GM10248 (cell line): ENCODE measurements at regions of chr9 and their contacts with region 1.

Region 1: DNA sequence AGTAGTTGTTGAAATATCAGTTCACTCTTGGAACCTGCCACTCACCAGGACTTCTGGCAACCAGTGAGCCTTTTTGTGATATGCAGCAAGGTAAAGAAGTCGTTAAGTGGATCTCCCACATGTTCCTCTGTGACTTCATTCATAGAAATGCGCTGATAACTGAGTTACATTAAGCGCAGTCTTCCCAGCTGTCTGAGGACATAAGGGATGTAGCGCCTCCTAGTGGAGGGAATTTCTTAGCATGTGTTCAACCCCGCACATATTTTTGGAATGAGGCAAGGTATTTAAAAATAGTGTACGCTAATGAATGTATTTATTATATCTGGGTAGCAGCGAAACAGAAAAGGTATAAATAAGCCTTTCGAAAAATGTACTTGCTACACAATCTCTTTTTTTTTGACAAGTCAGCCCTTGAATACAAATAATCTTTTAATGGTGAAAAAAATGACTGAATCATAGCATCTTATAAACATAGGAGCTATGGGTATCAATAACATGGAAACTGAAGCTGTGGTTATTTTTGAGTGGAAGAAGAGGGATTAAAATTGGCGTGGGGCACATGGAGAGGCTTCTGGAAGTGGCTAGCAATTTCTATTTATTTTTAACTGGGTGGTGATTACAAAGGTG is 38.0 kb downstream of the PALM2AKAP2 start:
- DNase-seq: peak; percentile 46
- CTCF ChIP-seq: peak; percentile 74

Region 2: DNA sequence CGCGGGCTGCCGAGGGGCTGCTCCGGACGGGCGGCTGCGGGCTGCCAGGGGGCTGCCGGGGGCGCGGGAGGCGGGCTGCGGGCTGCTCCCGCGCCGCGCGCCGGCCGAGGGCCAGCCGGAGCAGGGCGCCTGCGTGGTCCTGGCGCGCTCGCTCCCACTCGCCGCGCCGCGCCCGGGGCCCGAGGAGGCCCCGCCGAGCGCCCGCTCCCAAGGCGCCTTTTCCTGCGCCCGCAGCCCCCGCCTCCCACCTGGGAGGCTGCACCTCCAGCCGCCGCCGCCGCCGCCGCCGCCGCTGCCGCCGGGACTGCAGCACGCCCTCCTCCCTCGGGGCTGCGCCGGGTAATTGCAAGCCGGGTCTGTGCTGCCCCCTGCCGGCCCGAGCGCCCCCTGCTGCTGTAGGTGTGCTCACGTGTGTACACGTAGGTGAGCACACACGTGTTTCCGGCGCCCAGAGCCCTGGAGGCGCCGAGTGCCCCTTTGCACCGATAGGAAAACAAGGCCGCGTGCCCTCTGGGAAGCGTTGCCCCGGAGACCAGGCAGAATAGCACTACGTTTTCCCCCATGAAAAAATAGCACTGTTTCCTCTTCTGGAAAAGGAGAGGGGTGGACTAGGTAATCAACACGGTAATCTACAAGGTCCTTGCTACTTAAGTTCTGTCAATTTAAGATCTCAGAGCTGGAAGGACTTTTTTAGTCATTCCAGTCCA is 497.1 kb before region 1 on chr9 and contains the start of gene EPB41L4B:
- CTCF ChIA-PET with region 1: no interaction called
- POLR2A ChIA-PET with region 1: no interaction called
- DNase-seq: peak; percentile 92
- CTCF ChIP-seq: peak; percentile 98

Region 3: DNA sequence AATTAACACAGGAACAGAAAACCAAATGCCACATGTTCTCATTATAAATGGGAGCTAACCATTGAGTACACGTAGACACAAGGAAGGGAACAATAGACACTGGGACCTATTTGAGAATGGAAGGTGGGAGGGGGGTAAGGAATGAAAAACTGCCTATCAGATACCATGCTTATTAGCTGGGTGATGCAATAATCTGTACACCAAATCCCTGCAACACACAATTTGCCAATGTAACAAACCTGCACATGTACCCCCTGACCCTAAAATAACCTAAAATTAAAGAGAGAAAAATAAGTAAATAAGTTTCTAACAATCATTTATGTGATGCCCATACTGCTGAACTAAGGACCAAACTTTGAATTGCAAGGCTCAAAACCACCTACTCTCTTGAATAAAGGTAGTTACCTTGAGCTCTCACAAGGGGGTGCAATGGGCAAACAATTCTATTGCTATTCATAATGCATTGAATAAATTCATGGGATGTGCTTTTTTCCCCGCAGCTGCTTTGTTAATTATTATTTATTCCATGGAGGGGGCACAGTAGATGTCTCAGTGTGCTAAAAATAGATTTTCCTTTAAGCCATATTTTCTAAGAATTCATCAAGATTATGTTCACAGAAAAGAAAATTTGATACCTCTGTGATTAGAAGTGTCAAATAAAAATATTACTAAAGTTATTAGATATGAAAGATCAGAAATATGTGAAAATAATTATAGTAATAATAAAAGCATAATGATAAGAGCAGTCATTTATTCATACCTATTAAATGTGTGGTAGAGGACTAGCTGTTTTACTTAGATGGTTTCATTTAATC is 243.7 kb before region 1 on chr9:
- CTCF ChIA-PET with region 1: interaction called, 15 read pairs
- POLR2A ChIA-PET with region 1: no interaction called
- DNase-seq: peak; percentile 34
- CTCF ChIP-seq: peak; percentile 68

Region 4: DNA sequence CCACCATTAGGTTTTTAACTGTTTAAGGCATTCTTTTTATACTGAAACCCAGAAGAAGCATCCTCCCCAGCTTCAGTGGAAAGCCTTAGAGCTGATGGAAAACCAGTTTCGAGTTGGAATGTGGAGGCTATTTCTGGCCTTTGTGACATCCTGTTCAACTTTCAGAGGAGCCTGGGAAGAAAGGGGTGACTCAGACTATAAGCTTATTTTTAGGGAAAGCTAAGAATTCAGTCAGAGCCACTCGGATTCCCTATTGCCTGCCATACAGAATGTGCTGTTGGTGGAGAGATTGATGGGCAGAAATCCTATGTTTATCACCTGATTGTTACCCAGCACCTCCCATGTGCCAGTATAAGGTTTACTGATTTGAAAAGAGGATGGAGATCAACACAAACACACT is 18.2 kb before region 1 on chr9:
- CTCF ChIA-PET with region 1: interaction called, 17 read pairs
- POLR2A ChIA-PET with region 1: no interaction called
- DNase-seq: no peak
- CTCF ChIP-seq: no peak

Region 5: GRCh38 chr9:109806506-109807115 is 11.3 kb before region 1 on chr9:
- CTCF ChIA-PET with region 1: interaction called, 17 read pairs
- POLR2A ChIA-PET with region 1: no interaction called
- DNase-seq: no peak
- CTCF ChIP-seq: no peak

Region 6: GRCh38 chr9:109828254-109828653 is 10.3 kb after region 1 on chr9:
- CTCF ChIA-PET with region 1: interaction called, 10 read pairs
- POLR2A ChIA-PET with region 1: no interaction called
- DNase-seq: no peak
- CTCF ChIP-seq: no peak

Region 7: GRCh38 chr9:109843641-109844040 is 25.7 kb after region 1 on chr9:
- CTCF ChIA-PET with region 1: interaction called, 16 read pairs
- POLR2A ChIA-PET with region 1: no interaction called
- DNase-seq: no peak
- CTCF ChIP-seq: no peak